ENCODE measurements at regions of chr11 and their contacts with region 1.

Region 1: DNA sequence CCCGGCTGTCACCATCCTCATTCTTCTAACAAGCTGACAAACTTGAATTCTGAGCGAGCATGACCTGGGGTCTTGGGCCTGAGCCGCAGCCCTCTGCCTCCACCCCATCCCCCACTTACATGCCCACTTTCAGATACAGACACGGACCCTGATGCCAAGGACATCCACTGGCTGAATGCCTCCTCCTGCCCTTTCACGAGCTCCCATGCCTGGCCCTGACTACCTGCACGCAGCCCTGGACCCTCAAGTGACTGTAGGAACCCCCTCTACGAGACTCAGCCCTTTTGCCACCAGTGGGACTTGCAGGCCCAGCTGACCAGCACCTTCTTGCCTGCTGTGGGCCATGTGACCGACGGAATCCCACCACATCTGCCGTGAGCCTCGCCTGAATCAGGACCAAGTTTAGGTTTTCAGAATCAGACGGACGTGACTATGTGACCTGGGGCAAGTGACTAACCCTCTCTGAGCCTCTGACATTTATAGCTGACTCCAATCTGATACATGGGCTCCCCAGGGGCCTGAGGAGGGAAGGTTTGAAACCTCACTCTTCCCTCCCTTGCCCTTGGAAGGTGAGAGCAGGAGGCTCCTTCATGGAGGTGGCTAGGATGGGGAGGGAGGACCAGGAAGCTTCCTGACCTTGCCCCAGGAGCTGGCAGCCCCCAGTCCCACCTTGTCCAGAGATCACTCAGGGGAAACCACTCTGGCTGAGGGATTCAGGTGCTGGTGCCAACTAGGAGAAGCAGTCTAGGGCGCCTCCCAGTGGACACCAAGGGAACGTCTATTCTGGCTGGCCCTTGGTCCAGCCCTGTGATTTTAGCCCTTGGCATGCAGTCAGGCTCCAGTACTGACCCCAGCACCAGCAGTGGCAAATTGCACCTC is 46.9 kb upstream of the SYT7 start:
- DNase-seq: peak; percentile 65
- CTCF ChIP-seq: peak; percentile 68

Region 2: GRCh38 chr11:61607920-61608599 is 19.7 kb before region 1 on chr11:
- CTCF ChIA-PET with region 1: no interaction called
- POLR2A ChIA-PET with region 1: no interaction called
- DNase-seq: no peak
- CTCF ChIP-seq: no peak

Region 3: GRCh38 chr11:61639816-61640443 is 12.1 kb after region 1 on chr11:
- CTCF ChIA-PET with region 1: interaction called, 36 read pairs
- POLR2A ChIA-PET with region 1: no interaction called
- DNase-seq: no peak
- CTCF ChIP-seq: no peak

Region 4: DNA sequence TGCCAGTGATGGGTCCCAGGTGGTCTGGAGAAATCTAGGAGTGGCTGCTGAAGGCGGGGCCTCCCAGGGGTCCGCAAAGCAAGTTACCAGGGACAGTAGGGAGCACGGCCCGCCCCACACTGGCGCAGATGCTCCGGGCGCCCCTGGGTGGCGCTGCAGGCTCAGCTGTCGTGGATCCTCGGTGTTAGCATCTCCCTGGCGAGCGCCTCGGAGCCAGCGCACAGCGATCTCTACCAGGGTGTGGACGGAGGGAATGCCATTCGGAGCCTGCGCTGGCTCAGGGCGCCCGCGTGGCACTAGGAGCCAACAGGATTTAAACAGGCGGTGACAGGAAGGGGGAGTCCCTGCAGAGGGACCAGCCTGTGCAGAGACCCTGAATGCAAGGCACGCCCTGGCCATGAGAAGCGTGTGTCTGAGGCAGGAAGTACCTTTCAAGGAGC is 243.4 kb after region 1 on chr11:
- CTCF ChIA-PET with region 1: no interaction called
- POLR2A ChIA-PET with region 1: no interaction called
- DNase-seq: peak; percentile 87
- CTCF ChIP-seq: peak; percentile 93